WTC11 (cell line): ENCODE measurements at regions of chr9 and their contacts with region 1.

Region 1: GRCh38 chr9:122099271-122099869 is 6.3 kb upstream of the TTLL11 start:
- DNase-seq: peak; percentile 86
- ATAC-seq: peak; percentile 87
- H3K4me3 Mint-ChIP-seq: no peak overlapping the region
- H3K27ac Mint-ChIP-seq: no peak overlapping the region
- H3K4me1 Mint-ChIP-seq: peaks cover 13% of the 10 kb centered on the region
- H3K27me3 Mint-ChIP-seq: peaks cover 17% of the 10 kb centered on the region
- CTCF ChIP-seq: peak; percentile 94

Region 2: DNA sequence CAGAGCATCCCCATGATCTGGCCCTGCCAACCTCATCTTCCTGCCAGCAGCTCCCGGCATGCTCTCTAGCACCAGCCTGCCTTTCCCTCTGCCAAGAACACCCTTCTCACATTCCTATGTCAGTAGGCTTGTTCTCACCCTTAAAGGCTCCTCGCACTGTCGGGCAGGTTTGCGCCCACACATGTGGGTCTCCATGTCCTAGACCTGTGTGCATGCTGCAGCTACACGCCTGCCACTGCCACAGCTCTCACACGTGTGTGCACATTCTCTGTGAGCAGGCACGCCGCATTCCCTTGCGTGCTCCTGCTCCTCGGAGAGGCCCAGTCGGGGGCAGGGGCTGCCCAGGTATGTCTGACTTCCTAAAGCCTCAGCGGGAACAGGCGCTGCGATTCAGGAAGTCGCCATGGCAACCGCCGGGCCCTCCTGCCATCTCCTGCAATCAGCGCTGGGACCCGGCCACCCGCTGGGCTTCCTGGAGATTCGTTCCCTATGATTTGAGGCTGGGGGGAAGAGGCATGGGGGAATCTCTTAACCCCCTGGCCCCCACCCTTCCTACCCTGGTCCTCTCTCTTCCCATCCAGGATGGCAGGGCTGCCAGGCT is 32.1 kb after region 1 on chr9:
- CTCF ChIA-PET with region 1: interaction called, 627 read pairs
- POLR2A ChIA-PET with region 1: no interaction called
- DNase-seq: peak; percentile 79
- ATAC-seq: peak; percentile 61
- H3K4me3 Mint-ChIP-seq: peak overlapping the region; percentile 43
- H3K27ac Mint-ChIP-seq: no peak overlapping the region
- H3K4me1 Mint-ChIP-seq: peaks cover 53% of the 10 kb centered on the region
- H3K27me3 Mint-ChIP-seq: peaks cover 31% of the 10 kb centered on the region
- CTCF ChIP-seq: no peak

Region 3: GRCh38 chr9:122213589-122214413 is 114.4 kb after region 1 on chr9:
- CTCF ChIA-PET with region 1: interaction called, 13 read pairs
- POLR2A ChIA-PET with region 1: no interaction called
- DNase-seq: peak; percentile 94
- ATAC-seq: peak; percentile 94
- H3K4me3 Mint-ChIP-seq: peak overlapping the region; percentile 70
- H3K27ac Mint-ChIP-seq: no peak overlapping the region
- H3K4me1 Mint-ChIP-seq: peaks cover 27% of the 10 kb centered on the region
- H3K27me3 Mint-ChIP-seq: peaks cover 89% of the 10 kb centered on the region
- CTCF ChIP-seq: no peak

Region 4: DNA sequence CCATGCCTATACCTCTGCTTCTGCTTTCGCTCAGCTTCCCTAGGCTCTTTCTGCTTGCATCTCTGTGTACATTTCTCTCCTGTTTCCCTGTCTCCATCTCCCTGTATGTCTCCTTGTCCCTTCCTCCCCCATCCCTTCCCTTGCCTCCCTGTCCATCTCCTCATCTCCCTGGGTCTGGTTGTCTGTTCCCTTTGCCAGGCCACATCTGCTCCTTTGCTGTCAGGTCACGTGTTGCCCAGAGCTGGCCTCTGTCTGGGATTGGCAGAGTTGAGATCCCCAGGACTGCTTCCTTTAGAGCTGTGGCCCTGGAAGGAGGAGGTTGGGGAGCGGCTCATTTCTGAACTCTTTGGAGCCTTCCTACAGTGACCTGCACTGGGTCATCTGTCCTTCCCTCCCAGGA is 239.6 kb after region 1 on chr9:
- CTCF ChIA-PET with region 1: interaction called, 21 read pairs
- POLR2A ChIA-PET with region 1: no interaction called
- DNase-seq: no peak
- ATAC-seq: no peak
- H3K4me3 Mint-ChIP-seq: no peak overlapping the region
- H3K27ac Mint-ChIP-seq: no peak overlapping the region
- H3K4me1 Mint-ChIP-seq: peaks cover 60% of the 10 kb centered on the region
- H3K27me3 Mint-ChIP-seq: peaks cover 8% of the 10 kb centered on the region
- CTCF ChIP-seq: no peak

Region 5: DNA sequence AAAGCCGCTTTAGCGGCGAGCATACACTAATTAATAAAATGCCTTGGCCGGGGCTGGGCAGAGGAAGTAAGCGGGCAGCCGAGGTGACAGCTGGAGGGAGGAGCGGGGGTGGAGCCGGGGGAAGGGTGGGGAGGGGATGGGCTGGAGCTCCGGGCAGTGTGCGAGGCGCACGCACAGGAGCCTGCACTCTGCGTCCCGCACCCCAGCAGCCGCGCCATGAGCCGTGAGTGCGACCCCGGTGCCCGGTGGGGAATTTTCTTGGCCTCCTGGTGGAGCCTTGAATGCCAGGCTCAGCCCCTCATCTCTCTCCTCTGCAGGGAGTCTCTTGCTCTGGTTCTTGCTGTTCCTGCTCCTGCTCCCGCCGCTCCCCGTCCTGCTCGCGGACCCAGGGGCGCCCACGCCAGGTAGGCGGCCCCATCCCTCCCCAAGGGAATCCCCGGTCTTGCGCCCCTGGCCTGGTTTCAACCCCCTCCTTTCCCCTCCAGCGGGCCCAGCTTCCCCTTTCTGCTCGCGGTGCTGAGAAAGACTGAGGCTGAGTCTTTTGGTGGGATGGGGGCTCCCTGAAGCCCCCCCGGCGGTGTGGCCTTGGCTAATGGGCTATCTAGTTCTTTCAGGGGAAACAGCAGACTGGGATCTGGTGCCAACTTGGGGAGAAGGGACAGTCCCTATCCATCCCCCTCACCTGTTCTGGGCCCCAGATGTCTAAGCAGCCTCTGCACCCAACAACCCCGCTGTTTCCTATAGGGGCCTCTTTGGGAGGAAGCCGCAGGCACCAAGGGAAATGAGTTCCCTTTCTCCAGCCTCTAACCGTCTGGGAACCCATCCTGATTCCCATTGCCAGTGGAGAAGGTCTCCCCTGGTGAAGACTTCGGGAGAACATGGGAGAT is 271.7 kb after region 1 on chr9 and contains the start of gene PTGS1:
- CTCF ChIA-PET with region 1: interaction called, 16 read pairs
- POLR2A ChIA-PET with region 1: no interaction called
- DNase-seq: peak; percentile 36
- ATAC-seq: peak; percentile 66
- H3K4me3 Mint-ChIP-seq: peak within 1 kb of the TSS; percentile 76
- H3K27ac Mint-ChIP-seq: no peak within 1 kb of the TSS
- H3K4me1 Mint-ChIP-seq: peaks cover 31% of the 10 kb centered on the region
- H3K27me3 Mint-ChIP-seq: peaks cover 76% of the 10 kb centered on the region
- CTCF ChIP-seq: no peak
- total RNA-seq, gene PTGS1: 0.89 to 1.1 TPM (median 1.0 TPM) in 3 replicates

Region 6: DNA sequence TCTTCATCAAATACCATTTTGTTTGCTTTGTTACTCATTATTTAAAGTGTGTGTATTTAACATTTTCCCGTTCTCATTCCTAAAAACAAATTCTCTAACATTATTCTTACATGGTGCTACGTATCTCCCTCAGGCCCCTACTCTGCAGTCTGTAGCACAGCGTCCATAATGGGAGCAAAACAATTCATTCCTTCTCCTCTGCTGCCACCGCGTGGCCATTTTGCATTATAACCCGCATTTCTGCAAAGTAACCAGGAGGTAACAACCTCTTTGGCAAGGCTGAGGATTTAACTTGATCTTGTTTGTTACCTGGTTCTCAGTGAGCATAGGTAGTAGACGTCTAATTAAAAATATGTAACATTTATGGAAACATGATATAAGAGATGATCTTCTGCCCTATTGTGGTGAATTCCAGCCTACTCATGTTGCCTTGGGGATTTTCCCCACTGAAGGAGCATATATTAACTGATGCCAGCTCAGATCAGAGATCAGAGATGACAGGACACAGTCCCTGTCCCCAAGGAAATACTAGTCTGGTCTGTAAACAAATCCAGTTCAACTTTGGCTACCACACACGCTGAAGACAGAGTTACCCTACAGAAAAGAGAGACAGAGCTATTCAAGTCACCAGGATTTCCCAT is 711.1 kb after region 1 on chr9:
- CTCF ChIA-PET with region 1: interaction called, 12 read pairs
- POLR2A ChIA-PET with region 1: no interaction called
- DNase-seq: peak; percentile 81
- ATAC-seq: peak; percentile 94
- H3K4me3 Mint-ChIP-seq: no peak overlapping the region
- H3K27ac Mint-ChIP-seq: no peak overlapping the region
- H3K4me1 Mint-ChIP-seq: no peaks in the 10 kb centered on the region
- H3K27me3 Mint-ChIP-seq: peaks cover 11% of the 10 kb centered on the region
- CTCF ChIP-seq: peak; percentile 75